PC-3 (cell line): ENCODE measurements at regions of chr12 and their contacts with region 1.

Region 1: DNA sequence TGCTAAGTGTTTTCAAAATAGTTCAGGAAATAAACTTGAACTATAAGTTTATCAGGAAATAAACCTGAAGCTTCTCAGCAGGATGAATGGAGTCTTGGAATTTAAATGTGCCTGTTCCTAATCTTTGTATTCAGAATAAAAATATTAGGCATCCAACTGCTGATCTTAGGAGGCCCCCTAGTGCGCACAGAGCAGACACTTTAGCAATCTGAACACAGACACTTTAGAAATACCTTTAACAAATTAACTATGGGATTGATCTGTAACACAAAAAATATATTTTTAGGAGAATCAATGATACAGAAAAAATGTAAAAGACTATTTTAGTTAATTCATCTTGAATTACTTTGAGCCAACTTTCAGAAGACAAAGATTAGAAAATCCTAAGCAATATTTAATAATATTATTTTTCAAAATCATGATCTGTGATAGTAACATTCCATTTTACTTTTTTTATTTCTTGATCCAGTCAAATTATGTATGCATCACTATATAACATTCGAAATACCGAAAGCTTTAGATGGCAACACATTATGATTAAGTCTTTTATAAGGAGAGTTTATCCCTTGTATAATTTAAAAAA is 80.9 kb downstream of the SLC41A2 start:
- DNase-seq: peak; percentile 72
- ATAC-seq: peak; percentile 77
- H3K4me3 ChIP-seq: no peak overlapping the region
- H3K27ac ChIP-seq: no peak overlapping the region
- H3K4me1 ChIP-seq: peaks cover 7% of the 10 kb centered on the region; the same call in 1 of the 2 replicates
- H3K27me3 ChIP-seq: no peaks in the 10 kb centered on the region
- CTCF ChIP-seq: peak; percentile 96

Region 2: GRCh38 chr12:104381731-104382480 is 495.3 kb before region 1 on chr12:
- CTCF ChIA-PET with region 1: interaction called, 13 read pairs
- POLR2A ChIA-PET with region 1: no interaction called
- intact Hi-C with region 1: loop called (anchors 1 kb)
- DNase-seq: peak; percentile 96
- ATAC-seq: peak; percentile 75
- H3K4me3 ChIP-seq: peak overlapping the region; percentile 46; the same call in 1 of the 2 replicates
- H3K27ac ChIP-seq: no peak overlapping the region
- H3K4me1 ChIP-seq: peaks cover 16% of the 10 kb centered on the region
- H3K27me3 ChIP-seq: no peaks in the 10 kb centered on the region
- CTCF ChIP-seq: peak; percentile 99

Region 3: GRCh38 chr12:104588068-104588920 is 288.9 kb before region 1 on chr12:
- CTCF ChIA-PET with region 1: no interaction called
- POLR2A ChIA-PET with region 1: no interaction called
- intact Hi-C with region 1: loop called (anchors 5 kb)
- DNase-seq: peak; percentile 98
- ATAC-seq: peak; percentile 92
- H3K4me3 ChIP-seq: peak overlapping the region; percentile 59
- H3K27ac ChIP-seq: peak overlapping the region; percentile 85
- H3K4me1 ChIP-seq: peaks cover 51% of the 10 kb centered on the region
- H3K27me3 ChIP-seq: no peaks in the 10 kb centered on the region
- CTCF ChIP-seq: no peak

Region 4: DNA sequence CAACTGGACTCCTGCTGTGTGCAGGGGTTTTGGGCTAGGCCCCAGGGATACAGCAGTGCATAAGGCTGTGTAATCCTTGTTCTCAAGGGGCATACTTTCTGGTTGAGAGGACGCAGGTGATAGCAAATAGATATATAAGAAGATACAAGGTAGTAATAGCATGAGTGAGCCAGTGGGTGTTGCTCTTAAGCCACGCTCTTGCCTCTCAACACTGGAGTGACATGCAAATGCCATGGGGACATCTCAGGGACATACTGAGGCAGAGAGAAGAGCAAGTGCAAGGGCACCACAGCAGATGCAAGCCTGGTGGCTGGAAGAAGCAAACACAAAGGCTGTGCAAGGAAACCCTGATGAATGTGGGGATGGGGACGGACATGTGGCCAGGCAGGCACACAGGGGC is 197.1 kb before region 1 on chr12:
- CTCF ChIA-PET with region 1: no interaction called
- POLR2A ChIA-PET with region 1: no interaction called
- intact Hi-C with region 1: loop called (anchors 5 kb)
- DNase-seq: peak; percentile 49
- ATAC-seq: peak; percentile 64
- H3K4me3 ChIP-seq: no peak overlapping the region
- H3K27ac ChIP-seq: no peak overlapping the region
- H3K4me1 ChIP-seq: peaks cover 21% of the 10 kb centered on the region
- H3K27me3 ChIP-seq: no peaks in the 10 kb centered on the region
- CTCF ChIP-seq: peak; percentile 64

Region 5: DNA sequence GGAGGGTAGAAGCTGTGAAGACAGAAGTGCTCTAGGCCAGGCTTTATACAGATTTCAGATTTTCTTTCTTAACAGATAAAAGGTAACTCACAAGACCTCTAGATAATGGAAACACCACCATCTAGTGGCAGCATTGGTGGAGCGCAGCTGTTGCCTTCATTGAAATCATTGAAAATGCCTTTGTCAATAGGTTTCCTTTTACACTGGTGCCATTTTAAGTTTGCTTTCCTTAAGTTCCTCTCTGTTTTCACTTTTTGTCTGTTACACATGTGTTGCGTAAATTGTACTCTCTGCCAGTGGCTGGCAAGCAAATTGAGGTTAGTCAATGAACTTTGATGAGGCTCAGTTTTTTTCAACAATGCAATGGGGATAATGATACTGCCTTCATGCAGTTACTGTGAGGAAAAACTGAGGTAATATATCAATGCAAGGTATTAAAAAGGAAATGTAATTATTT is 175.9 kb after region 1 on chr12:
- CTCF ChIA-PET with region 1: no interaction called
- POLR2A ChIA-PET with region 1: no interaction called
- intact Hi-C with region 1: loop called (anchors 1 kb)
- DNase-seq: peak; percentile 97
- ATAC-seq: peak; percentile 95
- H3K4me3 ChIP-seq: no peak overlapping the region
- H3K27ac ChIP-seq: no peak overlapping the region
- H3K4me1 ChIP-seq: no peaks in the 10 kb centered on the region; the same call in 1 of the 2 replicates
- H3K27me3 ChIP-seq: no peaks in the 10 kb centered on the region
- CTCF ChIP-seq: peak; percentile 99